ENCODE measurements at regions of chr6 and their contacts with region 1.

Region 1: DNA sequence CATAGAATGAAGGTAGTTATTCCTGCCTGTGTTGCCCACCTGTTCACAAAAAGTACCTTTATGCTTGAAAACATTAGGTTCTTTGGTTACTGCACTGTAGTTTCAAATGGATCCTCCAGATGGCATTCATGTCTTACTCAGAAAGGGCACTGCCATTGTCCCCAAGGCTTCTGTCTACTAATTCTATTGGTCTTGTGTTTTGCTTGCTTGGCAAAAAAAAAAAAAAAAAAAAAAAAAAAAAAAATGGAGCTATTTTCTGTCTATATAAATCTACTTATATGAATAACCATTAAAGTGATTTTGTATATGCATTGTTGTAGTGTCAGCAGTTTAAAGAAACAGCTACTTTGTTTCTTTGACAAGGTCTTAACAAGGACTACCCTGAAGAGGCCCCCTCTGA is 12.7 kb upstream of the EFHC1 start:
- DNase-seq: peak; percentile 71
- H3K4me3 ChIP-seq: no peak overlapping the region
- H3K27ac ChIP-seq: no peak overlapping the region
- H3K4me1 ChIP-seq: no peaks in the 10 kb centered on the region
- H3K27me3 ChIP-seq: no peaks in the 10 kb centered on the region
- CTCF ChIP-seq: peak; percentile 45 to 58
- POLR2A ChIP-seq: no peak

Region 2: GRCh38 chr6:52098634-52099185 is 308.8 kb before region 1 on chr6:
- CTCF ChIA-PET with region 1: no interaction called
- POLR2A ChIA-PET with region 1: no interaction called
- dilution Hi-C with region 1: no loop called
- intact Hi-C with region 1: no loop called
- DNase-seq: peak; percentile 3
- H3K4me3 ChIP-seq: no peak overlapping the region
- H3K27ac ChIP-seq: no peak overlapping the region
- H3K4me1 ChIP-seq: no peaks in the 10 kb centered on the region
- H3K27me3 ChIP-seq: no peaks in the 10 kb centered on the region
- CTCF ChIP-seq: no peak
- POLR2A ChIP-seq: no peak

Region 3: GRCh38 chr6:52284460-52285176 is 122.8 kb before region 1 on chr6 and contains the start of gene MCM3:
- CTCF ChIA-PET with region 1: interaction called, 104 read pairs
- POLR2A ChIA-PET with region 1: interaction called, 3 read pairs
- dilution Hi-C with region 1: no loop called
- intact Hi-C with region 1: no loop called
- DNase-seq: peak; percentile 100
- H3K4me3 ChIP-seq: peak within 1 kb of the TSS; percentile 59 to 92 (median 71)
- H3K27ac ChIP-seq: peak within 1 kb of the TSS; percentile 51
- H3K4me1 ChIP-seq: peaks cover 15% of the 10 kb centered on the region
- H3K27me3 ChIP-seq: no peaks in the 10 kb centered on the region
- CTCF ChIP-seq: no peak
- POLR2A ChIP-seq: peak; percentile 47
- total RNA-seq, gene MCM3: 80.6 and 81.6 TPM in 2 replicates

Region 4: GRCh38 chr6:52454556-52454955 is 47.1 kb after region 1 on chr6:
- CTCF ChIA-PET with region 1: no interaction called
- POLR2A ChIA-PET with region 1: no interaction called
- dilution Hi-C with region 1: no loop called
- intact Hi-C with region 1: no loop called
- DNase-seq: peak; percentile 57
- H3K4me3 ChIP-seq: no peak overlapping the region
- H3K27ac ChIP-seq: peak overlapping the region; percentile 1
- H3K4me1 ChIP-seq: peaks cover 8% of the 10 kb centered on the region
- H3K27me3 ChIP-seq: no peaks in the 10 kb centered on the region
- CTCF ChIP-seq: no peak
- POLR2A ChIP-seq: no peak

Region 5: DNA sequence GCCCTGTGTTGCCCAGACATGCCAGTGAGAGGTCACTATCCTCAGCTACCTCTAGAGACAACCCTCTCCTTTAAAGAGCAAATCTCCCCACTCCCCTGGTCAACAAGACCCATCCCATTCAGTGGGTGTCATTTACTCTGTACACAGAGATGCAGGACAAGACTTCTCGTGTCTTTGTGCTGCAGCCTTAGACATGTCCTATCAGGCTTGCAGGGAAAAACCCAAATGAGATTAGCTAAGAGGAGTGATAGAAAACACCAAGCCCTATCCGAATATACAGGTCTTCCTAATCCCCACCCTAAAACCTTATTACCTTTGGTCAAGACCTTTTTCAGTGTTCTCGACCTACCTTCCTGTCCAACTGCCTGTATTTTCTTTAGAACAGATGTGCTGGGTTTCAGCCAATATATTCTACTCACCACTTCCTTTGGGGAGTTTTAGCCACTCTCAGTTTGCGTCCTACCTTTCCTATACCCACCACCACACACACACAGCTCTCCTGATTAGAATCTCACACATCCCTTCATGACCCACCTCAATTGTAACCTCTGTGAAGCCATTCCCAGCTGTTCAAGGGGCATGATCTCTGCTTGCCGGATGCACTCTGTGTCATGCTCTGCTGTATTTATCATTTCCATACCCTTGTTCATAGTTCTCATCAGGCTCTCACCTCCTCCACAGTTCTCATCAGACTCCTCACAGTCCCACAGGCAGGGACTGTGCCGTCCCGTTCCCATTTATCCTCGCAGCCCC is 129.7 kb after region 1 on chr6:
- CTCF ChIA-PET with region 1: interaction called, 11 read pairs
- POLR2A ChIA-PET with region 1: no interaction called
- dilution Hi-C with region 1: loop called (anchors 25 kb)
- intact Hi-C with region 1: no loop called
- DNase-seq: peak; percentile 78
- H3K4me3 ChIP-seq: no peak overlapping the region
- H3K27ac ChIP-seq: peak overlapping the region; percentile 74
- H3K4me1 ChIP-seq: peaks cover 83% of the 10 kb centered on the region
- H3K27me3 ChIP-seq: no peaks in the 10 kb centered on the region
- CTCF ChIP-seq: no peak
- POLR2A ChIP-seq: peak; percentile 9

Region 6: GRCh38 chr6:52598123-52598823 is 190.8 kb after region 1 on chr6:
- CTCF ChIA-PET with region 1: interaction called, 15 read pairs
- POLR2A ChIA-PET with region 1: no interaction called
- dilution Hi-C with region 1: no loop called
- intact Hi-C with region 1: no loop called
- DNase-seq: peak; percentile 54
- H3K4me3 ChIP-seq: no peak overlapping the region
- H3K27ac ChIP-seq: no peak overlapping the region
- H3K4me1 ChIP-seq: peaks cover 34% of the 10 kb centered on the region
- H3K27me3 ChIP-seq: no peaks in the 10 kb centered on the region
- CTCF ChIP-seq: peak; percentile 63 to 75
- POLR2A ChIP-seq: no peak

Region 7: GRCh38 chr6:52605610-52606185 is 198.2 kb after region 1 on chr6:
- CTCF ChIA-PET with region 1: interaction called, 10 read pairs
- POLR2A ChIA-PET with region 1: no interaction called
- dilution Hi-C with region 1: no loop called
- intact Hi-C with region 1: no loop called
- DNase-seq: no peak
- H3K4me3 ChIP-seq: no peak overlapping the region
- H3K27ac ChIP-seq: no peak overlapping the region
- H3K4me1 ChIP-seq: peaks cover 35% of the 10 kb centered on the region
- H3K27me3 ChIP-seq: no peaks in the 10 kb centered on the region
- CTCF ChIP-seq: no peak
- POLR2A ChIP-seq: no peak

Region 8: DNA sequence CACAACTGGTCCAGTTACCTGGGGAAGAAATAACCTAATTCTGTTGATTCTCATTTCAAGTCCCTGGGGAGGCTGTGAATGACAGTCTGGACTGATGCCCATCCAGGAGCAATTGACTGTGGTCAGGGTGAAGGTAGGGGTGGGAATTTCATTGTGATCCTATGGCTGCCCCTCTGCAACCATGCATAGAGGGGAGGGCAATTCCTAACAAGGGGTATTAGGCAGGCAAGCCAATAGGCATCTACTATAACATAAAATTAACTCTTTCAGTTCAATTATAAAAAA is 213.4 kb after region 1 on chr6:
- CTCF ChIA-PET with region 1: no interaction called
- POLR2A ChIA-PET with region 1: no interaction called
- dilution Hi-C with region 1: no loop called
- intact Hi-C with region 1: no loop called
- DNase-seq: no peak
- H3K4me3 ChIP-seq: no peak overlapping the region
- H3K27ac ChIP-seq: no peak overlapping the region
- H3K4me1 ChIP-seq: no peaks in the 10 kb centered on the region
- H3K27me3 ChIP-seq: no peaks in the 10 kb centered on the region
- CTCF ChIP-seq: no peak
- POLR2A ChIP-seq: no peak

Region 9: DNA sequence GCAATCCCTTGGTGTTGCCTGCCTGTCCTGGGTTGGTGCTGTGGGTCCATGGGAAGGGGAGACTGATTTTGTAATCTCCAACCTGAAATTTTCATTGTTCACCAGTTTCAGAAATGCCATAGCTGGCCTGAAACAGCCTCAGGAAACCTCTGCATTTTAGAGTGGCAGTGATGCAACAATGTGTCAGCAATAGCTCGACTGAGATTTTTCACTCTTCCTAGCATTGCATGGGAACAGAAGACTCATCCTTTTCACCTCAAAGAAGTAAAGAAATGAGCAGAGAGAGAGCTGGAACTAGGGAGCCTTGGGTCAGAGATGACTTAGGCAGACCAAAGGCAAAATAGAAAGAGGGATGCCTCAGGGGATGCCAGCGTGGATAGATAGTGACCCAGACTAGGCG is 239.7 kb after region 1 on chr6:
- CTCF ChIA-PET with region 1: interaction called, 18 read pairs
- POLR2A ChIA-PET with region 1: interaction called, 4 read pairs
- dilution Hi-C with region 1: no loop called
- intact Hi-C with region 1: no loop called
- DNase-seq: no peak
- H3K4me3 ChIP-seq: no peak overlapping the region
- H3K27ac ChIP-seq: no peak overlapping the region
- H3K4me1 ChIP-seq: no peaks in the 10 kb centered on the region
- H3K27me3 ChIP-seq: peaks cover 0 to 2% of the 10 kb centered on the region in 2 experiments
- CTCF ChIP-seq: no peak
- POLR2A ChIP-seq: no peak

Region 10: DNA sequence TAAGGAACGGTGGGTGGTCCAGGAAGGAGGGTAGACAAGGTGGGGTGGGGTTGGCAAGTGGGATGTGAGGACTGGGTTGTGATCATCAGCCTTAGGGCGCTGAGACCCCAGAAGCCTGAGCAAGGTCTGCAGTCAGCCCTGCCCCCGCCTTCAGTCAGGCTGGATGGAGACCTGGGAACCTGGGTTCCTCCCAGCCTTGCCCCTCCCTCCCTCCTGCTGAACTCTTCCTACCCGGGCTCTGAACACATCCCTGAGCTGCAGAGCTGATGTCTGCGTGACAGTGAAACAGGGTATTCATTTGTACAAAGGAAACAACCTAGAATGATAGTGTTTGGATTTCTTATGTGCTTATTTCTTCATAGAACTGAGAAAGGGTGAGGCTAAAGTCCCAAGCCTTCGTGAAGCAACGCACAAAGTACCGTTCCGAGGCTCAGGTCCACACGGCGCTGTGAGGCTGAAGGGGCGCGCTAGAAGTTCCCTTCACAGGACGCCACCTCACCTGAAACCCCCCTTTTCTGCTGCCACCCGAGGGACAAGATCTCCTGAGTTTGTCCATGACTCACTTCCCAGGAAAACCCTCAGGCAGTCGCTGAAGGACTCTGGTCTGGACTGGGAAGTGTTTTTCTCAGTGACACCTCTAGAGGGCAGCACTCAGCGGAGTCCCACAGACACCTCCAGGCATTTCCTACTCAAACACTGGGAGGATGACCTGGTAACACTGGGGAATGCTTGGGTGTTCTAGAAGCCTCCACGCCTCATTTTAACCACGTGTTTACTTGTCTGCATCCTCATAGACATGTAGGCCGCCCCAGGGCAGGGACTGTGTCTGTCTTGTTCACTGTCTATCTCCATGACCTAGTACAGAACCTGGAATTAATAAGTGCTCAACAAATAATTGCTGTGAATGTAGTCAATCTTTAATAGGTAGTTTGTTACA is 431.9 kb after region 1 on chr6:
- CTCF ChIA-PET with region 1: no interaction called
- POLR2A ChIA-PET with region 1: no interaction called
- dilution Hi-C with region 1: no loop called
- intact Hi-C with region 1: loop called (anchors 1 kb)
- DNase-seq: peak; percentile 65
- H3K4me3 ChIP-seq: no peak overlapping the region
- H3K27ac ChIP-seq: no peak overlapping the region
- H3K4me1 ChIP-seq: no peaks in the 10 kb centered on the region
- H3K27me3 ChIP-seq: peaks cover 0 to 5% of the 10 kb centered on the region in 2 experiments
- CTCF ChIP-seq: peak; percentile 66 to 78
- POLR2A ChIP-seq: no peak